HCT116 (cell line): ENCODE measurements at regions of chr12 and their contacts with region 1.

Region 1: DNA sequence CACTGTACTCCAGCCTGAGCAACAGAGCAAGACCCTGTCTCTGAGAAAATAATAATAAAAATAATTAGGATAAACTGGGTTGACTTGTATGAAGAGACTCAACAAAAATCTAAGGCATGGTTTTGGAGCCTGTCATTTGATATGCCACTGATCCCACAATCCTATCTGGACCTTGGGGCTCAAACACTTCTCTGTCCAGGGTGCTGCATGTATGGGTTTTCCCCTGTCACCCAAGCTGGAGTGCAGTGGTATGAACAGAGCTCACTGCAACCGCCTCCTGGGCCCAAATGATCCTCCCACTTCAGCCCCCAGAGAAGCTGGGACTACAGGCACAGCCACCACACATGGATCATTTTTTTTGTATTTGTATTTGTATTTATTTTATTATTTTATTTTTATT is 5.3 kb upstream of the VSIG10 start:
- DNase-seq: no peak
- ATAC-seq: no peak
- H3K4me3 ChIP-seq: no peak overlapping the region
- H3K27ac ChIP-seq: no peak overlapping the region
- H3K4me1 ChIP-seq: peaks cover 5 to 22% of the 10 kb centered on the region in 2 experiments; a peak in 3 of 4 replicates
- H3K27me3 ChIP-seq: no peaks in the 10 kb centered on the region
- CTCF ChIP-seq: no peak
- POLR2A ChIP-seq: no peak
- RAD21 ChIP-seq: no peak

Region 2: GRCh38 chr12:118120579-118121363 is 11.7 kb after region 1 on chr12:
- CTCF ChIA-PET with region 1: interaction called, 12 read pairs
- POLR2A ChIA-PET with region 1: interaction called, 3 read pairs
- RAD21 ChIA-PET with region 1: no interaction called
- intact Hi-C with region 1: no loop called
- DNase-seq: no peak
- ATAC-seq: peak; percentile 89
- H3K4me3 ChIP-seq: no peak overlapping the region
- H3K27ac ChIP-seq: peak overlapping the region; percentile 36; the same call in 1 of the 2 replicates
- H3K4me1 ChIP-seq: peaks cover 4 to 10% of the 10 kb centered on the region in 2 experiments; a peak in 3 of 4 replicates
- H3K27me3 ChIP-seq: no peaks in the 10 kb centered on the region
- CTCF ChIP-seq: peak; percentile 39 to 52 (median 46); a peak in 4 of 6 replicates
- POLR2A ChIP-seq: no peak
- RAD21 ChIP-seq: peak; percentile 66

Region 3: DNA sequence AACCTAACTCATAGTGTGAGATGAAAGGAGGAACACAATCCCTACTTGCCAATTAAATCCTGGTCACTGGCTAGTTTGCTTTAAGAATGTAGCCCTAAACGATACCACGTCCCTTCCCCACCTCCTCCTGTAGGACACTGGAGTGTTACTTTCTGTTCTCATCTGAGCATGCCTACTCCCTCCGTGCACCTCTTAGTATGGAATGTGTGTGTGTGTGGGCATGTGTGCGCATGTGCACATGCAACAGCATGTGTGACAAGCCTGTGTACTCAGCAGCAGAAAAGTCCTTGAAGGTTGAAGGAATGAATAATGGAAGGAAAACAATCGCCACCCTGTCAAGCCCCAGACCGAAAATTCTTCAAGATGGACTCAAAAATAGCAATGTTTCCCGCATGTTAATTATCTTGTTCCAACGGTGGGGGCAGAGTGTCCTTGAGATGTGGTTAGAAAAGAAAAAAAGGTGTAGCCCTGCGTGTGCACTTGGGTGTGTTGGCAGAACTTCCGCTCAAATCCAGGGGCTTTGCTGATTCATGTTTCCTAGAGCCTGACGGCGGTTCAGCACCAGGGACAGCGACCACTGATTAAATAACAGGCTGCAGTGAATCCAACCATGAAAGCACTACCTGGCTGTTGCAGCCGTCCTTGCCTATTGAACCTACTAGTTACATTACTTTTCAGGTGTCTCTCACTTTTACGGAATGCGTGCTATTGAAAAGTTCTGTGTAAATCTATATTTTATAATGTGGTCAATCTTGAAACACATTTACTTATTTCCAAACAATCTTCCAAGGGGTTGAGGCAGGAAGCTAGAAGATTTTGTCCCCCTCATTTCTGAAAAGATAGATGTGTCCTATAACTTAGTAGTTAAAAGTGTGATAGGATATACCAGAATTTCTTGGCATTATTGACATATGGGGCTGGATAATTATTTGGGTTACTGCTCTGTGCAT is 952.0 kb after region 1 on chr12:
- CTCF ChIA-PET with region 1: no interaction called
- POLR2A ChIA-PET with region 1: no interaction called
- RAD21 ChIA-PET with region 1: no interaction called
- intact Hi-C with region 1: no loop called
- DNase-seq: no peak
- ATAC-seq: no peak
- H3K4me3 ChIP-seq: no peak overlapping the region
- H3K27ac ChIP-seq: no peak overlapping the region
- H3K4me1 ChIP-seq: no peaks in the 10 kb centered on the region
- H3K27me3 ChIP-seq: 0 out of 2 replicates have a peak, but pooled peaks cover 6% of the 10 kb centered on the region
- CTCF ChIP-seq: no peak
- POLR2A ChIP-seq: no peak
- RAD21 ChIP-seq: no peak